WTC11 (cell line): ENCODE measurements at regions of chr5 and their contacts with region 1.

Region 1: GRCh38 chr5:174311531-174312269 is 266.2 kb downstream of the NSG2 start:
- DNase-seq: peak; percentile 90
- ATAC-seq: peak; percentile 86
- H3K4me3 Mint-ChIP-seq: peak overlapping the region; percentile 51
- H3K27ac Mint-ChIP-seq: no peak overlapping the region
- H3K4me1 Mint-ChIP-seq: peaks cover 11% of the 10 kb centered on the region; the same call in 1 of the 2 replicates
- H3K27me3 Mint-ChIP-seq: peaks cover 22% of the 10 kb centered on the region
- CTCF ChIP-seq: peak; percentile 86

Region 2: GRCh38 chr5:174020397-174021296 is 291.1 kb before region 1 on chr5:
- CTCF ChIA-PET with region 1: interaction called, 22 read pairs
- POLR2A ChIA-PET with region 1: no interaction called
- DNase-seq: peak; percentile 61
- ATAC-seq: peak; percentile 89
- H3K4me3 Mint-ChIP-seq: peak overlapping the region; percentile 82
- H3K27ac Mint-ChIP-seq: peak overlapping the region; percentile 17; the same call in 1 of the 2 replicates
- H3K4me1 Mint-ChIP-seq: peaks cover 27% of the 10 kb centered on the region
- H3K27me3 Mint-ChIP-seq: peaks cover 7% of the 10 kb centered on the region; the same call in 1 of the 2 replicates
- CTCF ChIP-seq: peak; percentile 53

Region 3: DNA sequence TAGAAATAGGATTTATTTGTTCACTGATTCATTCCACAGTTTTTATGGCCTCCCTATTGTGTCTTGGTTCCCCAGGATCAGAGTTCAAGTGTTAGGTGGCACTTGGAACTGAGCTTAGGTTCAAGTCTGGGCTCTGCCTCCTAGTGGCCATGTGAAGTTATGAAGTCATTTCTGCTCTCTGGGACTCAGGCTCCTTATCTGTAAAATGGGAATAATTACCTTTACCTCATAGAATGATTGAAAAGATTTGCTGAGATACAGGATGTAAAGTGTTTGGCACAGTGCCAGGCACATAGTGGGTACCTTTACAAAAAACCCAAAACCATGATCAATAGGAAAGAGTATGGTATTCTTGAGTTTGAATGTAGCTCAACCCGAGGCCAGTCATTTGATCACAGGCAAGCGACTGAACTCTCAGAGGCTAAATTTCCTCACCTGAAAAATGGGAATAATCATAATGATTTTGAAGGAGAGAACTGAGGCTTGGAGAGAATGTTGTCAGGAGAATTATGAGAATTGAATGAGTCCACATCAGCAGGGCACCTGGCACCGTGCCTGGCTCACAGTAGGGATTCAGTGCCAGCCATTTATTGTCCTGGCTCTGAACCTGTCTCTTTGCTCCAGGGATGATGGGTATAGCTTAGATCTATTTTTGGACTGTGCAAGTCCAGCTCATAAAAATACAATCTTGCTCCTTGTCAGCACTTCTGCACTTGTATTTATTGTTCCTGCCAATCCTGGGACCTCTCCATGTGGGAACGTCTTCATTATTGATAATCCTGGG is 255.4 kb before region 1 on chr5:
- CTCF ChIA-PET with region 1: interaction called, 21 read pairs
- POLR2A ChIA-PET with region 1: no interaction called
- DNase-seq: no peak
- ATAC-seq: no peak
- H3K4me3 Mint-ChIP-seq: no peak overlapping the region
- H3K27ac Mint-ChIP-seq: no peak overlapping the region
- H3K4me1 Mint-ChIP-seq: no peaks in the 10 kb centered on the region
- H3K27me3 Mint-ChIP-seq: peaks cover 4% of the 10 kb centered on the region; the same call in 1 of the 2 replicates
- CTCF ChIP-seq: no peak

Region 4: GRCh38 chr5:174096619-174097018 is 215.1 kb before region 1 on chr5:
- CTCF ChIA-PET with region 1: interaction called, 14 read pairs
- POLR2A ChIA-PET with region 1: no interaction called
- DNase-seq: no peak
- ATAC-seq: no peak
- H3K4me3 Mint-ChIP-seq: no peak overlapping the region
- H3K27ac Mint-ChIP-seq: no peak overlapping the region
- H3K4me1 Mint-ChIP-seq: peaks cover 6% of the 10 kb centered on the region; the same call in 1 of the 2 replicates
- H3K27me3 Mint-ChIP-seq: no peaks in the 10 kb centered on the region
- CTCF ChIP-seq: no peak

Region 5: DNA sequence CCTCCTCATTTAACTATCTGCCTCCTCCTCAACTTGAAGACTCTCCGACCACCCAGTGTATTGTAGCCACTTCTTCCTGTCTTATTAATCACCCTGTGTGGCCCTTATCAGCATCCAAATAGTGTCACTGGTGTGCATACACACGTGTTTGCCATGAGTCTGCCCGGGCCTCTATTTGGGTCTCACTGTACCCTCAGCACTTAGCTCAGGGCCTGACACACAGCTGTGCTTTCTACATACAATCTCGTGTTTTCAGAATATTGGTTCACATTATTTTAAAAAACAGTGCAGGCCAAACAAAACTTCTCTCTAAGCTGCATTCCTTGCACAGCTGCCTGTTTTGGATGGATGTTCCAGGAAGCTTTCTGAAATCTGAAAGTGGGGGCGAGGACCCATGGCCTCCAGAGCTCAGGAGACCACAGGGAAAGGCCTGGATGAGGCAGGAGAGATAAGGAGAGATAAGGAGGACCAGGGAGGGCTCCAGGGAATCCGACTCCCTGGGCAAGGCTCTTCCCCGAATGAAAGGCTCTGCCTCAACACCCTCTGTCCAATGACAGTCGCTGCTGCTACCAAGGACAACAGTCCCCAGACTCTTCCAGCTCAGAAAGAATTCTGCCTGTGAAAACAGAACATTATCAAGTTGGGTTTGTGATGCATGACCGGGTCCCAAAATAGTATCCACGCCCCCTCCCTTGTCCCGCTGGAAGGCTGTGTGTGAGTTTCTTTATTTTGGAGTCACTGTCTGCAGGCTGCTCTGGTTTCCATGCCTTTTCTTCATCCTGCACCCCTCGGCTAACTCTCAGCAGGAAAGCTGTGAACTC is 10.5 kb before region 1 on chr5:
- CTCF ChIA-PET with region 1: interaction called, 14 read pairs
- POLR2A ChIA-PET with region 1: no interaction called
- DNase-seq: no peak
- ATAC-seq: peak; percentile 69
- H3K4me3 Mint-ChIP-seq: no peak overlapping the region
- H3K27ac Mint-ChIP-seq: no peak overlapping the region
- H3K4me1 Mint-ChIP-seq: peaks cover 20% of the 10 kb centered on the region
- H3K27me3 Mint-ChIP-seq: no peaks in the 10 kb centered on the region
- CTCF ChIP-seq: no peak